Psoas muscle (tissue), 8 donors: ENCODE measurements at regions of chr22 and their contacts with region 1.

Region 1: DNA sequence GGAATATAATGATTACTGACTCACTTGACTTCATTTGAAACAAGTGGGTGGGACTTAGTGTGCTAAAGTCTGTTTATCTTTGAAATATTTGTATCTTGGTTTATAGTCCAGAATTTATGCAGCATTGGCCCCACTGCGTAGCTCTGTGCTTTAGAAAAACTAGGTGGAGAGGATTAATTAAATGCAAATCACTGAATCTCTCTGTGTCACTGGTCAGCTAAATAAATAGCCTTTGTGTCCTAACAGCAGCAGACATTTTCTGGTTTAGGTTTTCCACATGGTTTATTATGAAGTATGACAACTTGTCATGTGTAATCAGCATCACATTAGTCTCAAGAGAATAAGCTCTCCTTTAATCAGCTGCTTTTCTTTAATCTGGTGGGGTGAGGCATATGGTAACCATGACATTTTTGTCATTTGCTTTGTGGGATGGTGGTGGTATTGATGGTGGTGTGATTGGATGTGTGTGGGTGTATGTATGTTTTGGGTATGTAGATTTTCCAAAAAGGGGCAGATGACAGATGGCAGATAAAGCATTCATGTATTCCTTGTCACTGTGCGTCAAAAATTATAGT is 33.9 kb downstream of the BCL2L13 start:
- DNase-seq: no peak
- ATAC-seq: peak; percentile 14 to 50 (median 34)
- H3K4me3 ChIP-seq: peak overlapping the region; percentile 20
- H3K27ac ChIP-seq: peak overlapping the region; percentile 80
- H3K4me1 ChIP-seq: peaks cover 26% of the 10 kb centered on the region
- H3K27me3 ChIP-seq: no peaks in the 10 kb centered on the region
- CTCF ChIP-seq: no peak

Region 2: GRCh38 chr22:17436382-17436980 is 236.0 kb before region 1 on chr22:
- intact Hi-C with region 1: no loop called
- DNase-seq: no peak
- ATAC-seq: peak; percentile 53 to 80 (median 64)
- H3K4me3 ChIP-seq: peak overlapping the region; percentile 39
- H3K27ac ChIP-seq: peak overlapping the region; percentile 82
- H3K4me1 ChIP-seq: peaks cover 87% of the 10 kb centered on the region
- H3K27me3 ChIP-seq: no peaks in the 10 kb centered on the region
- CTCF ChIP-seq: no peak

Region 3: DNA sequence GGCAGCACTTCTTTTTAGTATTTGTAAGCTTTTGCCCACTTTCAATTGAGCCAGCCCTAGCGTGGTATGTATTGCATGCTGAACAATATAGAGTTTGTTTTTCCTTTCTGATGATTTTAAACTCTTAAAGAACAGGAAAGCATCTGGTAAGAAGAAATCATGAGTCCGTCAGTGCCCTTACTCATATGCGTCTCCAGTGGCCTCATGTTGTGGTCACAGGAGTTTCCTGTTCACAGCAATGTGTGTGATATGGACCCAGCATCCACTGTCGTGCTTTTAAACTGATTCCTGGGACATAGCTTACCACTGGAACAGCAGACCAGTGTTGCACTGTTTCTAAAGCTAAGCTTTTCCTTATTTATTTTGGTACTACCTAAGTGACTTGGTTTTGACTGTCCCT is 61.7 kb after region 1 on chr22:
- intact Hi-C with region 1: loop called in 1 of 2 experiments (anchors 10 kb)
- DNase-seq: no peak
- ATAC-seq: no peak
- H3K4me3 ChIP-seq: no peak overlapping the region
- H3K27ac ChIP-seq: no peak overlapping the region
- H3K4me1 ChIP-seq: no peaks in the 10 kb centered on the region
- H3K27me3 ChIP-seq: no peaks in the 10 kb centered on the region
- CTCF ChIP-seq: no peak